ENCODE measurements at regions of chr19 and their contacts with region 1.

Region 1: DNA sequence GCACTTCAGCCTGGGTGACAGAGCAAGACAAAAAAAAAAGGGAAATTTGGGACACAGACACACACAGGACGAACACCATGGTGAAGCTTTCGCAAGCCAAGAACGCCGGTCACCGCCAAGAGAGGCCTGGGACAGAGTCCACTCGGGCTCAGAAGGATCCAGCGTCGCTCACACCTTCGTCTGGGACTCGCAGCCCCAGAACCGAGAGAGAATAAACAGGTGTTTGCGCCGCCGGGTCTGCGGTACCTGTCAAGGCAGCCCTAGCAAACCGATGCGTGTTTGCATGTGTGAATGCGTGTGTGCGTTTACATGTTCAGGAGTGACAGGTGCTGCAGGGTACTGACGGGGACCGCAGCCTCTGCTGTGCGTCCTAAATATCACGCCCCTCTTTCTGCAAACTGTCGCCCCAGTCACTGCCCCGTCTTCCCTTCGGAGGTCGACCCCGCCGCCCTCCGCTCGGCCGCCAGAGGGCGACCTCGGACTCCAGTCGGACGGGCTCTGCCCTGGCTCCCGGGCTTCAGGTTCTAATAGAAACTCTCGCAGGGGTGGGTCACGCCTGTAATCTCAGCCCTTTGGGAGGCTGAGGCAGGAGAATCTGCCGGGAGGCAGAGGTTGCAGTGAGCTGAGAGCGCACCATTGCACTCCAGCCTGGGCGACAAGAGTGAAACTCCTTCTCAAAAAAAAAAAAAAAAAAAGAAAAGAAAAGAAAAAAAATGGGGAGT is 11.8 kb upstream of the CSNK1G2 start:
- DNase-seq: peak; percentile 65 to 86 (median 76)
- ATAC-seq: peak; percentile 93
- H3K4me3 ChIP-seq: peak overlapping the region; percentile 36
- H3K4me3 Mint-ChIP-seq: peak overlapping the region; percentile 71 to 85 (median 80)
- H3K27ac ChIP-seq: peak overlapping the region; percentile 45
- H3K27ac Mint-ChIP-seq: peak overlapping the region in 7 of 9 donors; percentile 23 to 80 (median 32)
- H3K4me1 ChIP-seq: peaks cover 8 to 9% of the 10 kb centered on the region in 2 donors
- H3K4me1 Mint-ChIP-seq: peaks cover 6 to 27% (median 22%) of the 10 kb centered on the region in 7 donors
- H3K27me3 ChIP-seq: no peaks in the 10 kb centered on the region
- H3K27me3 Mint-ChIP-seq: no peaks in the 10 kb centered on the region

Region 2: GRCh38 chr19:1942078-1942933 is 13.1 kb after region 1 on chr19:
- CTCF ChIA-PET with region 1: interaction called, 7 read pairs
- POLR2A ChIA-PET with region 1: no interaction called
- intact Hi-C with region 1: loop called (anchors 1 to 2 kb)
- DNase-seq: peak; percentile 58 to 84 (median 78)
- ATAC-seq: peak; percentile 51
- H3K4me3 ChIP-seq: peak overlapping the region; percentile 94
- H3K4me3 Mint-ChIP-seq: peak overlapping the region; percentile 91 to 100 (median 96)
- H3K27ac ChIP-seq: peak overlapping the region; percentile 98
- H3K27ac Mint-ChIP-seq: peak overlapping the region; percentile 90 to 99 (median 97)
- H3K4me1 ChIP-seq: peaks cover 21 to 30% of the 10 kb centered on the region in 2 donors
- H3K4me1 Mint-ChIP-seq: peaks cover 22 to 44% (median 30%) of the 10 kb centered on the region in 7 donors
- H3K27me3 ChIP-seq: no peaks in the 10 kb centered on the region
- H3K27me3 Mint-ChIP-seq: peaks cover 0 to 2% (median 0%) of the 10 kb centered on the region in 5 donors

Region 3: GRCh38 chr19:1979670-1980069 is 50.5 kb after region 1 on chr19:
- CTCF ChIA-PET with region 1: no interaction called
- POLR2A ChIA-PET with region 1: no interaction called
- intact Hi-C with region 1: loop called in 1 of 2 experiments (anchors 5 kb)
- DNase-seq: no peak
- ATAC-seq: no peak
- H3K4me3 ChIP-seq: no peak overlapping the region
- H3K4me3 Mint-ChIP-seq: no peak overlapping the region
- H3K27ac ChIP-seq: no peak overlapping the region
- H3K27ac Mint-ChIP-seq: no peak overlapping the region
- H3K4me1 ChIP-seq: no peaks in the 10 kb centered on the region
- H3K4me1 Mint-ChIP-seq: peaks cover 0 to 4% (median 0%) of the 10 kb centered on the region in 7 donors
- H3K27me3 ChIP-seq: no peaks in the 10 kb centered on the region
- H3K27me3 Mint-ChIP-seq: no peaks in the 10 kb centered on the region

Measured in naive thymus-derived CD4-positive, alpha-beta T cell (primary cell).